Calu3 (cell line): ENCODE measurements at regions of chr13 and their contacts with region 1.

Region 1: GRCh38 chr13:68628994-68629393 is 1398.9 kb upstream of the PCDH9 start:
- DNase-seq: no peak
- H3K4me3 Mint-ChIP-seq: no peak overlapping the region
- H3K27ac Mint-ChIP-seq: no peak overlapping the region
- H3K4me1 Mint-ChIP-seq: no peaks in the 10 kb centered on the region
- H3K27me3 Mint-ChIP-seq: no peaks in the 10 kb centered on the region
- CTCF ChIP-seq: no peak

Region 2: DNA sequence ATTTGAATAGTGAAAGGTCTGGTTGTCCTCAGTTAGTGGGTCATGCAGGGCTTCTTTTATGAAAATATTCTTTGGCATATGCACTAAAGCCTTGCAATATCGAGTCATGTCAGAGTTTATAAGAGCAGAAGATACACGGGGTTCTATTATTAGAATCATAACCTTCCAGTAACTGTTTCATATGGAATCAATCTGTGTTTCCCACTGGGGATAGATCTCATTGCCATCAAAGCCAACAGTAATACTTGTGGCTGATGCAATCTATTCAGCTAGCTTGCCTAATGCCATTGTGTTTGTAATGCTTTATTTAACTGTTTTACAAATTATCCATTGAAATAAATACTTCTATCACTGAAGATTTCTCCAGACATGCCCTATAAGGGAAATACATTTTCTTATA is 651.9 kb before region 1 on chr13:
- CTCF ChIA-PET with region 1: no interaction called
- intact Hi-C with region 1: no loop called
- DNase-seq: no peak
- H3K4me3 Mint-ChIP-seq: no peak overlapping the region
- H3K27ac Mint-ChIP-seq: no peak overlapping the region
- H3K4me1 Mint-ChIP-seq: no peaks in the 10 kb centered on the region
- H3K27me3 Mint-ChIP-seq: no peaks in the 10 kb centered on the region
- CTCF ChIP-seq: no peak

Region 3: GRCh38 chr13:68509734-68510621 is 119.0 kb before region 1 on chr13:
- CTCF ChIA-PET with region 1: no interaction called
- intact Hi-C with region 1: no loop called
- DNase-seq: no peak
- H3K4me3 Mint-ChIP-seq: no peak overlapping the region
- H3K27ac Mint-ChIP-seq: no peak overlapping the region
- H3K4me1 Mint-ChIP-seq: no peaks in the 10 kb centered on the region
- H3K27me3 Mint-ChIP-seq: no peaks in the 10 kb centered on the region
- CTCF ChIP-seq: no peak

Region 4: DNA sequence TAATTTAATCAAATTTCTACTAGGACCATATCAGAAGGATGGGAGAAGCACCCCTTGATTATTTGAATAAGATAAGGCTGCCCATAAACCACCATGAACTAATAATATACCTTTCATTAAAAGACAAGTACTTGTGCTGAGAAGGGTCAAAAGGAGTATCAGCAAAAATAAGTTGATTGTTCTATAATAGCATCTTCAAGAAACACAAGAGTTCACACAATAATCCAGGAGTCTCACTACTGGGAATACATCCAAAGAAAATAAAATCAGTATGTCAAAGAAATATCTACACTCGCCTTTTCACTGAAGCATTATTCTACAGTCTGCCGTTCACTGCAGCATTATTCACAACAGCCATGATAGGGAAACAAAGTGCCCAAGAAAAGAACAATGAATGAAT is 88.8 kb before region 1 on chr13:
- CTCF ChIA-PET with region 1: no interaction called
- intact Hi-C with region 1: loop called (anchors 10 kb)
- DNase-seq: no peak
- H3K4me3 Mint-ChIP-seq: no peak overlapping the region
- H3K27ac Mint-ChIP-seq: no peak overlapping the region
- H3K4me1 Mint-ChIP-seq: no peaks in the 10 kb centered on the region
- H3K27me3 Mint-ChIP-seq: no peaks in the 10 kb centered on the region
- CTCF ChIP-seq: no peak

Region 5: DNA sequence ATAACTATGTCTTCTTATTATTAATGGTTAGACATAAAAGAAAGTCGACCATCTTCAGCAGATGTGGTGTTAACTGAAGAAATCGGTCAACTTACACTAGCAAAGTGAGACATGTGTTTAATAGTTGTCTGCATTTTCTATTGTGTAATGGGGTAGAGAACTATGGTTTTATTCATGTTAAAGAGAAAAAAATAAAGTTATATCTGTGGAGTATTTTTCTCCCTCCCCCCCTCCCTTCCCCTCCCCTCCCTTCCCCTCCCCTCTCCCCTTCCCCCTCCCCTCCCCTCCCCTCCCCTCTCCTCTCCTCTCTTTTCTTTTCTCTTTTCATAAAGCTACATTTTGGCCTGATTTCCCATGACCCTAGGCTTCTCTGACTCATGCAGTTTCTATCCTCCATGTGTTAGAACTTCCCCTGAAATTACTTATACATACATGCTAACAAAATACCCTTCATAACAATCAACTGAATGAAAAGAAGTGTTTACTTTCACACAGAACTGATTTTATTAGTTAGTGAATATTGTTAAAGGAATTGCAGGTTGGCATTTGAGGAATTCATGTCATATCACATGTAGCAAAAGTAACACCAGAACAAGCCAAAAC is 47.6 kb after region 1 on chr13:
- CTCF ChIA-PET with region 1: no interaction called
- intact Hi-C with region 1: no loop called
- DNase-seq: no peak
- H3K4me3 Mint-ChIP-seq: no peak overlapping the region
- H3K27ac Mint-ChIP-seq: no peak overlapping the region
- H3K4me1 Mint-ChIP-seq: no peaks in the 10 kb centered on the region
- H3K27me3 Mint-ChIP-seq: no peaks in the 10 kb centered on the region
- CTCF ChIP-seq: no peak

Region 6: DNA sequence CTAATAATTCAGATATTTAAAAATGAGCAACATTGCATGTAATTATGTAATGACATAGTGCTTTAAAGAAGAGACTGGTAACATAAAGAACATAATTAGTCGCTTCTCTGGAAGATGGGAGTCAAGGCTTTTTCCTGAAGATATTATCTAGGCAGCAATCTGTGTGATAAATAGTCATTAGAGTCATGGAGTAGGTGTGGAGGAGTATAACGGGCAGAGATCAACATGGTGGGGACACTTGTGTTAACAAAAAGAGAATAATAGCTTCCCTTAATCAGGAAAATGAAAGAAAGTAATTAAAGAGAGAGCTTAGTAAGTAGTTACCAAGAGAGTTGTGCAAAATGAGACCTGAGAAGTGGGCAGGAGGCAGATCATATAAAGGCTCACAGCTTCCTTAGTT is 61.6 kb after region 1 on chr13:
- CTCF ChIA-PET with region 1: no interaction called
- intact Hi-C with region 1: no loop called
- DNase-seq: no peak
- H3K4me3 Mint-ChIP-seq: no peak overlapping the region
- H3K27ac Mint-ChIP-seq: no peak overlapping the region
- H3K4me1 Mint-ChIP-seq: no peaks in the 10 kb centered on the region
- H3K27me3 Mint-ChIP-seq: no peaks in the 10 kb centered on the region
- CTCF ChIP-seq: no peak